ENCODE measurements at regions of chr5 and their contacts with region 1.

Region 1: GRCh38 chr5:146426853-146427618 is 20.1 kb upstream of the TCERG1 start:
- DNase-seq: peak; percentile 66
- H3K4me3 Mint-ChIP-seq: no peak overlapping the region
- H3K27ac Mint-ChIP-seq: no peak overlapping the region
- H3K4me1 Mint-ChIP-seq: no peaks in the 10 kb centered on the region
- H3K27me3 Mint-ChIP-seq: no peaks in the 10 kb centered on the region
- CTCF ChIP-seq: peak; percentile 85

Region 2: DNA sequence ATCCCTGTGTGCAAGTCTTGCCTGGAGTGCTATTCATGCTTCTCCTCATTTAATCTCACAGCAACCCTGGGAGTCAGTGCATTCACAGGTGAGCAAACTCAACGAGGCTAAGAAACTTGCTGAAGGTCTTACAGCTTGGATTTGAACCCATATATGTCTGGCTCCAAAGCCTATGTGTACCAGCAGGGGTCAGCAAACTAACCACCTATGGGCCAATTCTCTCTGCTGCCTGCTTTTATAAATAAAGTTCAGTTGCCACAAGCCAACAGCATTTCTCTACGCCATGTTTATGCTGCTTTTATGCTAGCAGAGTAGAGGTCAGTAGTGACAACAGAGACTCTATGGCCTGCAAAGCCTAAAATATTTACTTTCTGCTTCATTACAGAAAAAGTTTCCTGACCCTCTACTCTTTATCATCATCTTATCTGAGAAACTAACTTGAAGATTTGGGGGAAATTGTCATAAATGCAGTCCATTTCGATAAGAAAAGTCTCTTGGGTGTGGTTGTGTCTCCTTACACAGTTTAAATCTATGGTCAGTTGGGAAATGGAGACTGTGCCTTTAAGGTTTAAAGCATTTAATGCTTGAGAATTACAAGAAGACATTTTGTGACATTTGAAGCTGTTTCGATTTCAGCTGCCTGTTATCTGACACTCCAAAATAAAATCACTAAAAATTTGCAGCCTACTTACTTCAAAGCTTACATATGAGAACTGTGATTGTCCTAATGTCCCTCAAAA is 729.6 kb before region 1 on chr5:
- CTCF ChIA-PET with region 1: no interaction called
- POLR2A ChIA-PET with region 1: no interaction called
- intact Hi-C with region 1: loop called (anchors 2 kb)
- DNase-seq: peak; percentile 75
- H3K4me3 Mint-ChIP-seq: no peak overlapping the region
- H3K27ac Mint-ChIP-seq: no peak overlapping the region
- H3K4me1 Mint-ChIP-seq: no peaks in the 10 kb centered on the region
- H3K27me3 Mint-ChIP-seq: no peaks in the 10 kb centered on the region
- CTCF ChIP-seq: peak; percentile 68

Region 3: GRCh38 chr5:146079695-146080361 is 347.2 kb before region 1 on chr5:
- CTCF ChIA-PET with region 1: interaction called, 3 read pairs
- POLR2A ChIA-PET with region 1: no interaction called
- intact Hi-C with region 1: loop called (anchors 10 kb)
- DNase-seq: peak; percentile 82
- H3K4me3 Mint-ChIP-seq: no peak overlapping the region
- H3K27ac Mint-ChIP-seq: peak overlapping the region; percentile 44
- H3K4me1 Mint-ChIP-seq: peaks cover 15% of the 10 kb centered on the region
- H3K27me3 Mint-ChIP-seq: no peaks in the 10 kb centered on the region
- CTCF ChIP-seq: no peak

Region 4: DNA sequence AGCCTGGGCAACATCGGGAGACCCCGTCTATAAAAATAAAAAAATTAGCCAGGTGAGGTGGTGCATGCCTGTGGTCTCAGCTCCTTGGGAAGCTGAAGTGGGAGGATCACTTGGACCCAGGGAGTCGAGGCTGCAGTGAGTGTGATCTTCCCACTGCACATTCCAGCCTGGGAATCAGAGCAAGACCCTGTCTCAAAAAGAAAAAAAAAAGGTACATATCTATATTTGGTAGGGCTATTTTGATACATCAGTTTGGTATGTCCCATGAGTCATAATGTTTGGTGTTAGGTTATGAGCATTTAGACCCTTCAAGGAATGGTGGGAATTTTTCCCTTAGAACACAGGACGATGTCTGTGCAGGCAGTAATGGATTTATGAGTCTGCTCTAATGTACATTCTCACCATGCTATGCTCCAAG is 143.7 kb before region 1 on chr5:
- CTCF ChIA-PET with region 1: interaction called, 37 read pairs
- POLR2A ChIA-PET with region 1: interaction called, 5 read pairs
- intact Hi-C with region 1: no loop called
- DNase-seq: peak; percentile 89
- H3K4me3 Mint-ChIP-seq: peak overlapping the region; percentile 0
- H3K27ac Mint-ChIP-seq: peak overlapping the region; percentile 88
- H3K4me1 Mint-ChIP-seq: peaks cover 20% of the 10 kb centered on the region
- H3K27me3 Mint-ChIP-seq: no peaks in the 10 kb centered on the region
- CTCF ChIP-seq: no peak

Region 5: DNA sequence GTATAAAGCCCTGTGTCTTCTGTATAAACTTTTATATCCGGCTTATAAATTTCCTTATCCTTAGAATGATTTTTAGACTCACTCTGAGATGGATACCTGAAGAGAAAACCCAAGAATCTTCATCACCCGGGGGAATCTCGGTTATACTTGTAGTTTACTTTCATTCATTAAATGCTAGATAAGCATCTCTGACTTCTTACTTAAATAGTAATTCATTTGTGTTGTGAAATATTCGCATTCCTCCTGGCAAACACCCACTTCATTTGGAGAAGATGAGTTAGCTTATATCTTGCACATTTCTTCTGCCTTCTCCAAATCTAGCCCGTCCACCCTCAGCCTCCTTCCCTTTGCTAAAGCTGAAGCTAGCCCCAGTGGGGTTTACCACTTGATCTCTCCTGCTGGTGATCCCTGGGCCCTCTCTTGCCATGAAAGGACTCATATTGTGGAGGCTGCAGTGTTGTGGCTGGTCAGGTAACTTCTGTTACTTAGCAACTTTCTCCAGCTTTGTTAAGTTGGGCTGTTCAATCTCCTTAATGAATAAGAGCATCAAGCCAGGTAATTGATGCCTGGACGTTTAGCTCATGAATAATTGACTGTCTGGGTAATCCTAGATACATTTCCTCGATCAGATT is 99.7 kb before region 1 on chr5:
- CTCF ChIA-PET with region 1: interaction called, 13 read pairs
- POLR2A ChIA-PET with region 1: no interaction called
- intact Hi-C with region 1: no loop called
- DNase-seq: peak; percentile 9
- H3K4me3 Mint-ChIP-seq: no peak overlapping the region
- H3K27ac Mint-ChIP-seq: no peak overlapping the region
- H3K4me1 Mint-ChIP-seq: peaks cover 6% of the 10 kb centered on the region
- H3K27me3 Mint-ChIP-seq: peaks cover 46% of the 10 kb centered on the region
- CTCF ChIP-seq: no peak

Region 6: DNA sequence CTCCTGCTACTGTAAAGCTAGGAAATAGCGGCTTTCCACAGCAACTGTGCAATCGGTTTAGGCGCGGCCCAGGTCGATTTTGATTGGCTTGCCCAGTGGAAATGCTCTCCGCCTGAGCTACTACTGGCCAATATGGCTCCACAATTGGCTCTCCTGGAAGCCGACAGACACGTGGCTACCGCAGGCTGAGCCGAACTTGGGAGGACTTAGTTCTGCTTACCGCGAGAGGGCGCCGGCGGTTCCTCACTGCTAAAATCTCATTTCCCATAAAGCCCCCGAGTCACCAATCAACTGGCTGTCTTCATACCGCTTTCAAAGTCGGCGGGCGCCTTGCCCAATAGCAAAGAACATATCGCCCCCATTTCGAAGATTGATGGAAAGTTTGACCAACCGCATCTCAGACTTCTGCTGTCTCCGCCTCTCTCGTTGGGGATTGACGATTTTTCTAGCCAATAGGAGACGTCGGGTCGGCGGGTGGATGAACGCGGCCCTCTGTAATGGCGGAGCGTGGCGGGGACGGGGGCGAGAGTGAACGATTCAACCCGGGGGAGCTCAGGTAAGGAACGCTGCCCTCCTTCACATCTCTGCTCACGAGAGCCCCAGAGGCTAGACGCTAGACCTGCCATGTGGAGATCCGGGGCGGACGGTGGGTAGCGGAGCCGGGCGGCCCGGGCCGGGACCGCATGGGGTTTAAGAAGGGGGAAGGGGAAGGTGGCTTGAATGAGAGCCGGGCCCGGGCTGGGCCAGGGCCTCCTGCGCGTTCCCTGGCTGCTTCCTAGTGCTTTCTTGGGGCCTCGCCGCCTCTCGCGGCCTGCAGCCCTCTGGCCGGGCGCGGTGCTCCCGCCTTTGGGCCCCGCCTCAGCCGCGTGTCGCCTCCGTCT is 20.1 kb after region 1 on chr5 and contains the start of gene TCERG1:
- CTCF ChIA-PET with region 1: interaction called, 47 read pairs
- POLR2A ChIA-PET with region 1: interaction called, 10 read pairs
- intact Hi-C with region 1: no loop called
- DNase-seq: peak; percentile 100
- H3K4me3 Mint-ChIP-seq: peak within 1 kb of the TSS; percentile 97
- H3K27ac Mint-ChIP-seq: peak within 1 kb of the TSS; percentile 99
- H3K4me1 Mint-ChIP-seq: peaks cover 36% of the 10 kb centered on the region
- H3K27me3 Mint-ChIP-seq: no peaks in the 10 kb centered on the region
- CTCF ChIP-seq: peak; percentile 63
- total RNA-seq, gene TCERG1: 128 and 134 TPM in 2 replicates

Region 7: GRCh38 chr5:146919304-146919703 is 492.3 kb after region 1 on chr5:
- CTCF ChIA-PET with region 1: no interaction called
- POLR2A ChIA-PET with region 1: no interaction called
- intact Hi-C with region 1: no loop called
- DNase-seq: no peak
- H3K4me3 Mint-ChIP-seq: no peak overlapping the region
- H3K27ac Mint-ChIP-seq: no peak overlapping the region
- H3K4me1 Mint-ChIP-seq: no peaks in the 10 kb centered on the region
- H3K27me3 Mint-ChIP-seq: no peaks in the 10 kb centered on the region
- CTCF ChIP-seq: no peak